T-cell (primary cell): ENCODE measurements at regions of chr10 and their contacts with region 1.

Region 1: DNA sequence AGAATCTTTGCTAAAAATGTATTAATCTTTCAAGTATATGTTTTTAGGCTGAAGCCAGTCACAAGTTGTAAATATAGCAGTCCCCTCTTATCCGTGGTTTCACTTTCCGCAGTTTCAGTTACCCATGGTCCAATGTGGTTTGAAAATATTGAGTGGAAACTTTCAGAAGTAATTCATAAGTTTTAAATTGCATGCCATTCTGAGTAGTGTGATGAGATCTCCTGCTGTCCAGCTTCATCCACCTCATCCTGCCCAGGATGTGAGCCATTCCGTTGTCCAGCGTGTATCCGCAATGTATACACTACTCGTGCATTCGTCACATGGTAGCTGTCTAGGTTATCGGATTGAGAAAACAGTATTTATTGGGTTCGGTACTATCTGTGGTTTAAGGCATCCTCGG is 12.2 kb downstream of the PDCD4 start:
- DNase-seq: no peak
- ATAC-seq: peak in 2 of 4 experiments; percentile 13 to 37
- H3K4me3 ChIP-seq: peak overlapping the region in 1 of 2 donors; percentile 8
- H3K4me3 Mint-ChIP-seq: peak overlapping the region; percentile 59 to 68 (median 63)
- H3K27ac ChIP-seq: peak overlapping the region; percentile 15
- H3K27ac Mint-ChIP-seq: peak overlapping the region; percentile 84 to 87
- H3K4me1 ChIP-seq: peaks cover 16 to 40% of the 10 kb centered on the region in 2 experiments
- H3K4me1 Mint-ChIP-seq: peaks cover 77 to 80% (median 80%) of the 10 kb centered on the region in 3 donors
- H3K27me3 ChIP-seq: no peaks in the 10 kb centered on the region
- H3K27me3 Mint-ChIP-seq: no peaks in the 10 kb centered on the region

Region 2: GRCh38 chr10:110864662-110865140 is 19.2 kb before region 1 on chr10:
- CTCF ChIA-PET with region 1: interaction called in 1 of 2 experiments, 4 read pairs
- POLR2A ChIA-PET with region 1: interaction called, 6 to 11 read pairs
- DNase-seq: peak in 33 of 35 experiments; percentile 15 to 92 (median 61)
- ATAC-seq: peak; percentile 68 to 78 (median 74)
- H3K4me3 ChIP-seq: peak overlapping the region in 1 of 2 donors; percentile 18
- H3K4me3 Mint-ChIP-seq: peak overlapping the region; percentile 63 to 84 (median 79)
- H3K27ac ChIP-seq: peak overlapping the region; percentile 96
- H3K27ac Mint-ChIP-seq: peak overlapping the region; percentile 99
- H3K4me1 ChIP-seq: peaks cover 92 to 93% of the 10 kb centered on the region in 2 experiments
- H3K4me1 Mint-ChIP-seq: peaks cover 98 to 100% (median 99%) of the 10 kb centered on the region in 3 donors
- H3K27me3 ChIP-seq: no peaks in the 10 kb centered on the region
- H3K27me3 Mint-ChIP-seq: no peaks in the 10 kb centered on the region